ENCODE measurements at regions of chr12 and their contacts with region 1.

Region 1: GRCh38 chr12:107131832-107132616 is 38.7 kb upstream of the CRY1 start:
- DNase-seq: peak; percentile 29
- H3K4me3 ChIP-seq: no peak overlapping the region
- H3K27ac ChIP-seq: no peak overlapping the region
- H3K4me1 ChIP-seq: no peaks in the 10 kb centered on the region
- H3K27me3 ChIP-seq: no peaks in the 10 kb centered on the region
- CTCF ChIP-seq: peak; percentile 52 to 73 (median 64)
- POLR2A ChIP-seq: no peak

Region 2: DNA sequence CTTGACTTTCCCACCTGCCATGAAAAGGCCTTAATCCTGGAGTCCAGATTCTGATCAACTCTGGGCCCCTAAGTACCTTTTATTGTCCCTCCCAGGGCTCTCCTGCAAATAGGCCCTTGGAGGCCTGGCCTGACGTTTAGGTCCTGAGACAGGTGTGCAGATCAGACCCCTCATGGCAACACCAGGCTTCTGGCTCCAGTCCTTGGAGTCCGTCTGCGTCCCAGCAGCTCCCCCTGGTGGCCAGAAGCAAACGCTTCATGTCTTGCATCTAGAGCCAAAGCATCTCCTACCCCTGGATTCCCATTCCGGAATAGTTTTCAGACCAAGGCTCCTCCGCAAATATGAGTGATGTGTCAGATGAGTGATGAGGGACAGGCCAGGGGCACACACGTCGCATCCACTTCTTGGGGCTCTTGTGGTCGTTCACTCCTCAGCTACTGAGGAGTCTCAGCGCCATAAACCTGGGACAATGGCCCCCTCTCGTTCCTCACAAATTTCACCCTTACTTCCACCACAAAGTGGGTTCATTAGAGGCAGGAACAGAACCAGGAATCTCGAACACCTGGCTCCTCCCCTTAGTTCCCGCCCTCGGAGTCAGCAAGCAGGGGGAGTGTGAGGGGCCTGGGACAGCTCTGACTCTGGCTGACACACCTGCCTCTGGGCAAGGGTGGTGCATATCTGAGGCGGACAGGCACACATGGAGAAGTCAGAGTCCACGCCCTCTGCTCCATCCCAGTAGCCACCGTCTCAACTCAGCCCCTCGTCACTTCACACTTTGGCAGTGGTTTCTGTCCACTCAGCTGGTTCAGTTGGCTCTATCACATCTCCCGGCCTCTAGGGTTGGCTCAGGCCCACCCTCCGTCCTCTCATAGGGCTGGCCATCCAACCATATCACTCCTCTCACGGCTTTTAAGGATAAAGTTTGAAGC is 475.7 kb after region 1 on chr12:
- intact Hi-C with region 1: loop called (anchors 5 kb)
- DNase-seq: peak; percentile 91
- H3K4me3 ChIP-seq: no peak overlapping the region
- H3K27ac ChIP-seq: no peak overlapping the region
- H3K4me1 ChIP-seq: no peaks in the 10 kb centered on the region
- H3K27me3 ChIP-seq: no peaks in the 10 kb centered on the region
- CTCF ChIP-seq: peak; percentile 80 to 96 (median 85)
- POLR2A ChIP-seq: no peak